GM10248 (cell line): ENCODE measurements at regions of chr11 and their contacts with region 1.

Region 1: DNA sequence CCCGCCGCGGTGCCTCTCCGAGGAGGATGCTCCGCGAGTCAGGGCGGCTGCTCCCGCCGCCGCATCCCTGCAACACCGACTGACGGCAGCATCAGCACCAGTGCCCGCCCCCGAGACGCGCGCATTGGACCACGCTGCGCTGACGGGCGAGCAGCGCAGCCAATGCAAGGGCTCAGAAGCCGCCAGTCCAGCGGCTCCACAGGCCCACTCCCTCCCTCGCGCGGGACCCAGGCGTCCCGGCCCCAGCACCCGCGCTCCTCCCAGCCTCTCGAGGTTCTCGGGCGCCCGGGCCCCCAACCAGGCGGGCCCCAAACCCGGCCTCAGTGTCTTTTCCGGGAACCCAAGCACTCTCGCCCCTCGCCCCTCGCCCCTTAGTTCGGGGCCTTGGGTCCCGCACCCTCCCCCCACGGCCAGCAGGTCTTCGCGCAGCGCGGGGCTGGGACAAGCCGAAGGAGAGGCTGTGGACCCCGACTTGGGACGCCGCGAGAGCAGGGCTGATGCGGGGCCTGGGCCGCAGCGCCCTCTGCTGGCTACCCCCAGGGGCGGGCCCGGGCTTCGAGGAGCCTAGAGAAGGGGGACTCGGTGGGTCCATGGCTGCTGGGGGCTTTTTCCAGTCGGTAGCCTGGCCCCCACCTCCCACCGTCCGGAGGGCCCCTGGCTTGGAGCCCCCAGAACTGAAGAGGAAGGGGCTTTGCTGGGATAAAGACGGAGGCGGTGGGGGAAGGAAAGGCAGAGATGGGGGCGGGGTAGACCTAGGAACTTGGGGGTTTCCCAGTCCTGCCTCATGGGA is at the start of gene NRXN2:
- DNase-seq: peak; percentile 96
- CTCF ChIP-seq: peak; percentile 86

Region 2: DNA sequence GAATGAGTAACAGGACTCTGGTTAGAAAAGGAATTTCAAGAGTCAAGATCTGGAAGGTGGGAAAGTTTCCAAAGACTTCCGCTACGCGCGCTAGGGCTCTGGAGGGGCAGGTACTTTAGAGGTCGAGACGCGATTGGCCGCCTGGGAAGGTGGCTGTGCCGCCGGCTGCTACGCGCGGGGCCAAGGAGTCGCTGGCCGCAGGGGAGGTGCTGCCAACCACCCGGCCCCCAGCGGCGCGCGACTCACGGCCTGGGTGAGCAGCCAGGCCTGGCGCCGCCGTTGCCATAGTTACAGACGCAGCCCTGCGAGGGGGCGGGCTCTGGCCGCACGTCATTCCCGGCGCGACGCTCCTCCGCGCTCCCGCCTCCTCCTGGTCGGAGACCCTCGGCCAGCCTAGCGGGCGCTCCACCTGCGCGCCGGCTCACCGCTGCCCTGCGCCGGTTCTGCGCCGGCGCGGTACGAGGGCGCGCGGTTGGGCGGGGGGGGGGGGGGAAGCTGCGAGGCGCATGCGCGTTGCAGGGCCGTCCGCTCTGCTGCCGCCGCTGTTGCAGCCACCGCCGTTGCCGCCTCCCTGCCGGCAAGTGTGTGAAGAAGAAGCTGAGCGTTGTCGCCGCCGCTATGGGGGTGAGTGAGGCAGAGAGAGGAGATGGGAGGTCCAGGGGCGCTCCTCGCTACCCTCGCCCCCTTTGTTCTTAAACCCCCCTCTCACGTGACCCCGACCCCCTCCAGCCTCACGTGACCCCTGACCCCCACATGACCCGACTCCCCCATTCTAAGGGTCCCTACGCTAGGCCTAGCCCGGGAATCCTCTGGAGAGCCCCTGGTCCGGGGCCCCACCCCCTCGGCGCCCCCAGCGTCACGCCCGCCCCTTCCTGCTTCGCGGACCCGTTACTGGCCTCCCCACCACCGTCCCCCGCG is 784.6 kb before region 1 on chr11 and contains the start of gene NAA40:
- CTCF ChIA-PET with region 1: no interaction called
- POLR2A ChIA-PET with region 1: interaction called, 11 read pairs
- DNase-seq: peak; percentile 99
- CTCF ChIP-seq: no peak

Region 3: DNA sequence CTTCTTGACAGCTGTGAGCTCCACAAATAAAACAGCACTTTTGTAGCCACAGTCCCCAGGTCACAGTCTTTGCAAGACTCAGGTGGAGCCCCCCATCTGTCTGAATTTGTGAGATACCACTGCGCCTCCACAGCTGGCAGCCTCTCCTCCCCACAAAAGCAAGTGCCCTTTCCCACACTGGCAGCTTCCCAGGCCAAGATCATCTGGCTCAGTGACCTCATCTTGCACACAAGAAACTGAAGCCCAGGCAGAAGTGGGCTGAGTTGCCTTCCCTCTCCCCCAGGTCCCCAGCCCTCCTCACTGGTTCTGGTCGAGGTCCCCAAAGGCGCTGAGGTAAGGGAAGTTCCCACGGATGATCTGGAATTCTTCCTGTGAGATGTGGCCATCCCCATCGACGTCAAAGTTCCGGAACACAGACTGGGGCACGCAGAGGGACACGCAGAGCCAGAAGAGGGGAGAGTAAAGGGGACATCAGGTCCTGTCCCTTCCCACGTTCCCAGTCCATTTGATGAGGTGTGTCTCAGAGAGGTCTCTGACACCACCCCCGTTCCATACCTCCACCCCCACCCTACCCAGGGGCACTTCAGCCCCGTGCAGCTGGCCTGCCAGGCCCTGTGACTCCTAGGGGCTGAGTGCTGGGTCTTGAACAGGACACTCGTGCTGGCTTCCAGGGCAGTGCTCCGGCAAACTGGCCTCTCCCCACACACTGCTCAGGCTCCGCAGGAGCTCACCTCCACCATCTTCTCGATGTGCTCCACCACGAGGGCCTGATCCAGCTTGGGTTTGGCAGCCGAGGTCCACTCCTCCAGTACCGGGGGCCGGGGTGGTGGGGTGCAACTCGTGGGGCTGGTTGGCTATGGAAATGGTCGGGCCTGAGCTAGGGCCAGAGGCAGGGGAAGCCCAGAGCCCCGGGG is 11.8 kb after region 1 on chr11:
- CTCF ChIA-PET with region 1: interaction called, 10 read pairs
- POLR2A ChIA-PET with region 1: no interaction called
- DNase-seq: no peak
- CTCF ChIP-seq: no peak